Panc1 (cell line): ENCODE measurements at regions of chr19 and their contacts with region 1.

Region 1: GRCh38 chr19:55258828-55259539 is at the start of gene PPP6R1:
- DNase-seq: peak; percentile 100
- ATAC-seq: peak; percentile 91
- H3K4me3 ChIP-seq: peak within 1 kb of the TSS; percentile 81 to 96
- H3K27ac ChIP-seq: peak within 1 kb of the TSS; percentile 99
- H3K4me1 ChIP-seq: peaks cover 37% of the 10 kb centered on the region
- H3K27me3 ChIP-seq: no peaks in the 10 kb centered on the region
- CTCF ChIP-seq: no peak
- total RNA-seq, gene PPP6R1: 172 TPM

Region 2: GRCh38 chr19:55339048-55339888 is 80.3 kb after region 1 on chr19 and contains the start of gene KMT5C:
- CTCF ChIA-PET with region 1: interaction called, 13 read pairs
- POLR2A ChIA-PET with region 1: interaction called, 4 read pairs
- in situ Hi-C with region 1: no loop called
- intact Hi-C with region 1: no loop called
- DNase-seq: peak; percentile 100
- ATAC-seq: peak; percentile 92
- H3K4me3 ChIP-seq: peak within 1 kb of the TSS; percentile 73 to 87
- H3K27ac ChIP-seq: peak within 1 kb of the TSS; percentile 98
- H3K4me1 ChIP-seq: peaks cover 16% of the 10 kb centered on the region
- H3K27me3 ChIP-seq: no peaks in the 10 kb centered on the region
- CTCF ChIP-seq: no peak
- total RNA-seq, gene KMT5C: 30.6 TPM